Endothelial cell of umbilical vein (primary cell): ENCODE measurements at regions of chrX and their contacts with region 1.

Region 1: GRCh38 chrX:65601530-65602220 is 65.8 kb upstream of the MSN start:
- DNase-seq: peak; percentile 97
- H3K4me3 ChIP-seq: no peak overlapping the region
- H3K27ac ChIP-seq: peak overlapping the region; percentile 96
- H3K4me1 ChIP-seq: peaks cover 44% of the 10 kb centered on the region
- H3K27me3 ChIP-seq: no peaks in the 10 kb centered on the region
- CTCF ChIP-seq: no peak
- POLR2A ChIP-seq: peak; percentile 41

Region 2: DNA sequence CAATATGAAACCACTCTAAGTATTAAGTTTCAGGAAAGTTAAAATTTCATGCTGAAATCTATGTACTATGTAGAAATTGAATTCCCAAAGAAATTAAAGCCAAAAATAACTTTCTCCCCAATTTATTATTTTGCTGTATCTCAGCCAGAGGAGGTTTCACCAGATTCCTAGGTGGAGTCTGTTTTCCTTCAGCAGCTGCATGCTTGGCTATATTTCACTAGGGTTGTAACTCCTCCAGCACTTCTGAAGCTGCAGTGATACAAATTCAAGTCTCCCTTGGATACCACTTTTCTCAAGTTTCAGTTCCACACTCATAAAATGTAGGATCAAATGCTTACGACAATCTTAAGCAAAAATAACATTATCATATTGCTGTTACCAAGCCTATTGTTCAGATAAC is 584.2 kb before region 1 on chrX:
- CTCF ChIA-PET with region 1: no interaction called
- POLR2A ChIA-PET with region 1: no interaction called
- dilution Hi-C with region 1: no loop called
- intact Hi-C with region 1: no loop called
- DNase-seq: no peak
- H3K4me3 ChIP-seq: no peak overlapping the region
- H3K27ac ChIP-seq: no peak overlapping the region
- H3K4me1 ChIP-seq: no peaks in the 10 kb centered on the region
- H3K27me3 ChIP-seq: no peaks in the 10 kb centered on the region
- CTCF ChIP-seq: no peak
- POLR2A ChIP-seq: no peak

Region 3: GRCh38 chrX:65644621-65645270 is 43.1 kb after region 1 on chrX:
- CTCF ChIA-PET with region 1: interaction called, 4 read pairs
- POLR2A ChIA-PET with region 1: no interaction called
- dilution Hi-C with region 1: no loop called
- intact Hi-C with region 1: loop called (anchors 1 kb)
- DNase-seq: peak; percentile 90
- H3K4me3 ChIP-seq: no peak overlapping the region
- H3K27ac ChIP-seq: peak overlapping the region; percentile 70
- H3K4me1 ChIP-seq: peaks cover 22% of the 10 kb centered on the region
- H3K27me3 ChIP-seq: no peaks in the 10 kb centered on the region
- CTCF ChIP-seq: no peak
- POLR2A ChIP-seq: no peak

Region 4: DNA sequence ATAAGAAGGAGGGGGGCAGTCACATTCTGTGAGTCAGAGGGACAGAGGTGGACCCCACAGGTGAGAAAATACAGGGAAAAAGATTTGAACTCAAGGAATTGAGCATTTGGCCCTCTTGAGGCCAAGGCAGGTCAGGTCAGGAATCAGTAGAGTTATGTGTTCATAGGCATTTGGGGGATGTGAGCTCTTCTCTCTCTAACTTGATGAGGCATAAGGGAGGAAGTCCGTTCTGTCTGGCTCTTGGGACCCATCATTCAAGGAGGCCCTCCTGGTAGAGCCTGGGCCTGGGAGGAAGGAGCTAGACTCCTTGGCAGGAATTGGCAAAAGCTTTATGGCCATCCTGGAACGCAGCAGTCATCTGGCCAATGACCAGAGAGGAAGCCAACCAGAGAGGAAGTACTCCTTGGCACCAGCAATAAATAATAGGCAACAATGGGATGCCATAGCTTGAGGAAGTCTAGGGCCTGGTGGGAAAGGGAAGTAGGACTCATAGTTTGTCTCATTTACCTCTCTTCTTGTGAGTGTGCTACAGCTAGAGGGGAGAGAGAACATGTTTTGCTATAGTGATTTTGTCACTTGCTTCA is 118.8 kb after region 1 on chrX:
- CTCF ChIA-PET with region 1: interaction called, 4 read pairs
- POLR2A ChIA-PET with region 1: no interaction called
- dilution Hi-C with region 1: no loop called
- intact Hi-C with region 1: loop called (anchors 1 kb)
- DNase-seq: peak; percentile 75
- H3K4me3 ChIP-seq: no peak overlapping the region
- H3K27ac ChIP-seq: peak overlapping the region; percentile 89
- H3K4me1 ChIP-seq: peaks cover 50% of the 10 kb centered on the region
- H3K27me3 ChIP-seq: no peaks in the 10 kb centered on the region
- CTCF ChIP-seq: peak; percentile 3 to 6
- POLR2A ChIP-seq: no peak

Region 5: GRCh38 chrX:65821721-65822496 is 220.2 kb after region 1 on chrX:
- CTCF ChIA-PET with region 1: no interaction called
- POLR2A ChIA-PET with region 1: no interaction called
- dilution Hi-C with region 1: no loop called
- intact Hi-C with region 1: no loop called
- DNase-seq: no peak
- H3K4me3 ChIP-seq: no peak overlapping the region
- H3K27ac ChIP-seq: no peak overlapping the region
- H3K4me1 ChIP-seq: no peaks in the 10 kb centered on the region
- H3K27me3 ChIP-seq: peaks cover 3 to 19% of the 10 kb centered on the region in 2 experiments
- CTCF ChIP-seq: no peak
- POLR2A ChIP-seq: no peak